Activated CD4-positive, alpha-beta memory T cell treated with anti-CD3 and anti-CD28 coated beads for 36 hours (primary cell): ENCODE measurements at regions of chr11 and their contacts with region 1.

Region 1: GRCh38 chr11:117807482-117808327 is 10.7 kb upstream of the DSCAML1 start:
- DNase-seq: peak; percentile 84
- H3K4me3 Mint-ChIP-seq: no peak overlapping the region
- H3K27ac Mint-ChIP-seq: no peak overlapping the region
- H3K4me1 Mint-ChIP-seq: peaks cover 17% of the 10 kb centered on the region
- H3K27me3 Mint-ChIP-seq: peaks cover 2% of the 10 kb centered on the region

Region 2: DNA sequence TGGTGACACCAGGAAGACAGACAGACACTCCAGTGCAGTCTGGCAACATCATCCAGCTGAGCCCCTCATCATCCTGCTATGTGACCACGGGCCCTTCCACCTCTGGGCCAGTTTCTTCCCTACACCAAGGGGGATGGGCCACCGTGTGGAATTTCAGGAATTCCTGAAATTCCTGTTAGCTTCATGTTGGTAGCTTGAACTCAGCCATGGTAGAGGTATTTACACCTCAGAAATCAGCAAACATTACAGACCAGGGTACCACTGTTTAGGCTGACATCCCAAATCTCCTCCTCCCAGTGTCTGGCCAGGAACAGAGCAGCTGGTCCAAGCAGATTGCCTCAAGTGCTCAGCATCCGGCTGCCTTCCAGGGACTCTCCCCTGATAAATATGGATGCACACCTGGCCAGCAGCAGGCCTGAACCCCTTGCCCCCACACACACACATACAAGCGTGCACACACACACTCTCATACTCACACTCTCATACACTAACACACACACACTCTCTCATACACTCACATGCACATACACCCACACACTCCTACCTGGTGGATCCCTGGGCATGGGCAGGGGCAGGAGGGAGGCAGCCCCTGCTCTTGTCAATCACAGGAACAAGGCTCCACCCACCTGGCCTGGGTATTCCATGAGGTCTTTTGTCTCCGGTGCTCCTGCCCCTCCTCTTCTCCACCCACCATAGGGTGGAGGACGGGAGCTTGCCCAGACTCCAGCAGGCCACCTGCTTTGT is 1120.1 kb before region 1 on chr11:
- CTCF ChIA-PET with region 1: no interaction called
- POLR2A ChIA-PET with region 1: no interaction called
- intact Hi-C with region 1: no loop called
- DNase-seq: no peak
- H3K4me3 Mint-ChIP-seq: no peak overlapping the region
- H3K27ac Mint-ChIP-seq: no peak overlapping the region
- H3K4me1 Mint-ChIP-seq: no peaks in the 10 kb centered on the region
- H3K27me3 Mint-ChIP-seq: peaks cover 13% of the 10 kb centered on the region

Region 3: GRCh38 chr11:117796872-117797529 is 10.7 kb before region 1 on chr11 and contains the start of gene DSCAML1:
- CTCF ChIA-PET with region 1: interaction called, 19 read pairs
- POLR2A ChIA-PET with region 1: no interaction called
- intact Hi-C with region 1: no loop called
- DNase-seq: peak; percentile 42
- H3K4me3 Mint-ChIP-seq: no peak within 1 kb of the TSS
- H3K27ac Mint-ChIP-seq: no peak within 1 kb of the TSS
- H3K4me1 Mint-ChIP-seq: peaks cover 7% of the 10 kb centered on the region
- H3K27me3 Mint-ChIP-seq: peaks cover 53% of the 10 kb centered on the region
- total RNA-seq, gene DSCAML1: 0.29 to 0.67 TPM

Region 4: DNA sequence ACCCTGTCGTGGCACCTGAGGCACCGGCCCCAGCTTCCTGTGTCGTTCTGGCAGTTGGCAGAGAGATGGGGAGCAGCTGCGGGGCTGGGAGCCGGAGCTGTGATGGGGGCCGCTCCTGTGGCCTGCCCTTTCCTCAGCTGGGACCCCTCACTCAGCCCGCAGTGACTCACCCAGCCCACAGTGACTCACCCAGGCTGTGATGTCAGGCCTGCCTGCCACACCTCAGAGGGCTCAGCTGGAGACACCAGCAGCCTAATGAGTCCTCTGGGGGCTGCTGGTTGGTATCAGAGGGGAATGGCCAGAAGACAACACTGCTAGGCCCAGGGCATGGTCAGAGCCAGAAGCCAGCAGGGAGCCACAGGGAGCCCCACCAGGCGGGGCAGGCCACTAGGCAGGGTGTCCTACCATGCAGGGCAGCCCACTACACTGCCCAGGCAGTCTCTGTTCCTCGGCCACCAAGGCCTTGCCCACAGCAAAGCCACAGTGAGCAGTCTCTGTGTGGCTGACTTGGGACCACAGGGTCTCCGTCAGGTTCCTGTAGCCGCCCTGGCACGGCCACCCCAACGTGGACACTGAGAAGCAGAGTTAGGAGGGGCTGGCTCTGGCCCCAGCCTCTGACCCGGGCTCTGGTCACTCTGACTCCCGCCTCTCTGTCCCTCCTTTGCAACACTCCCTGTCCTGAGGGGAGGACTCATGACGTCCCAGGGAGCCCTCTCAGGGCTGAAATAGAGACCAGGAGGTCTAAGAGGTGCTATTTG is 21.1 kb after region 1 on chr11:
- CTCF ChIA-PET with region 1: interaction called, 68 read pairs
- POLR2A ChIA-PET with region 1: no interaction called
- intact Hi-C with region 1: no loop called
- DNase-seq: peak; percentile 91
- H3K4me3 Mint-ChIP-seq: no peak overlapping the region
- H3K27ac Mint-ChIP-seq: peak overlapping the region; percentile 28
- H3K4me1 Mint-ChIP-seq: peaks cover 45% of the 10 kb centered on the region
- H3K27me3 Mint-ChIP-seq: no peaks in the 10 kb centered on the region

Region 5: DNA sequence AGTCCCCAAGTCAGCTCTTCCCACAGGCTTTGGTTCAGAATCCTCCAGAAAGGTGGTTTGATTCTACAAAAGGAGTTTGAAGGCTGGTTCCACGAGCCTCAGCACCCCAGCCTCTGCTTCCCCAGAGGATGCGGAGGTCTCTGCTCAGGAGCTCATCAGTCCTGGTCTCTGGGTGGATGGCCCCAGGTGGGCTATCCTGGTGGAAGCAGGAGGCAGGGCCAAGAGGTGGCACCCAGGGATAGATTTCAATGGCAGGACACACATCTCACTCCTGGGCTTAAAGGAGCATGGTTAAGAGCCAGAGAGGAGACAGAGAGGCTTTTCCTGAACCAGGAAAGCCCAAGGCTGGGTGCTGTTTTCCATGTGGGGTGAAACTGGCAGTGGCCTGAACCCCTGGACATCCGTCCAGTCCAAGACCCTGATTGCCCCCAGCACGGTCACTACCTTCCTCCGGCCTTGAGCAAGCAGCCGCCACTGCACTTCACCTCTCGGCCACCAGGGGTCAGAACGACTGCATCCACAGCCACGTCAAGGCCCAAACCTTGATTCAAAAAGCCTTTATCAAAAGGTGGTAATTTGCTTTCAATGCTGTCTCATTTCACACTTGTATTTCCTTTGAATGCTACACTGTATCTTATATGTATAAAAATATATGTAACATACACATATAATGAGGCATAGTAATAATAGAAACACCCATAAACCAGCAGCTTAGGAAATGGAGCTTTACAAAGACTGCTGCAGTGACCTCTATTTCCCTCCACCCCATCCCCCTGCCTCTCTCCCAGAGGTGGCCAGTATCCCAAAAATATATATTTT is 36.2 kb after region 1 on chr11:
- CTCF ChIA-PET with region 1: interaction called, 14 read pairs
- POLR2A ChIA-PET with region 1: no interaction called
- intact Hi-C with region 1: no loop called
- DNase-seq: peak; percentile 90
- H3K4me3 Mint-ChIP-seq: no peak overlapping the region
- H3K27ac Mint-ChIP-seq: no peak overlapping the region
- H3K4me1 Mint-ChIP-seq: no peaks in the 10 kb centered on the region
- H3K27me3 Mint-ChIP-seq: no peaks in the 10 kb centered on the region

Region 6: GRCh38 chr11:118046051-118046963 is 238.6 kb after region 1 on chr11:
- CTCF ChIA-PET with region 1: interaction called, 148 read pairs
- POLR2A ChIA-PET with region 1: no interaction called
- intact Hi-C with region 1: no loop called
- DNase-seq: peak; percentile 58
- H3K4me3 Mint-ChIP-seq: peak overlapping the region; percentile 28
- H3K27ac Mint-ChIP-seq: peak overlapping the region; percentile 91
- H3K4me1 Mint-ChIP-seq: peaks cover 91% of the 10 kb centered on the region
- H3K27me3 Mint-ChIP-seq: no peaks in the 10 kb centered on the region

Region 7: DNA sequence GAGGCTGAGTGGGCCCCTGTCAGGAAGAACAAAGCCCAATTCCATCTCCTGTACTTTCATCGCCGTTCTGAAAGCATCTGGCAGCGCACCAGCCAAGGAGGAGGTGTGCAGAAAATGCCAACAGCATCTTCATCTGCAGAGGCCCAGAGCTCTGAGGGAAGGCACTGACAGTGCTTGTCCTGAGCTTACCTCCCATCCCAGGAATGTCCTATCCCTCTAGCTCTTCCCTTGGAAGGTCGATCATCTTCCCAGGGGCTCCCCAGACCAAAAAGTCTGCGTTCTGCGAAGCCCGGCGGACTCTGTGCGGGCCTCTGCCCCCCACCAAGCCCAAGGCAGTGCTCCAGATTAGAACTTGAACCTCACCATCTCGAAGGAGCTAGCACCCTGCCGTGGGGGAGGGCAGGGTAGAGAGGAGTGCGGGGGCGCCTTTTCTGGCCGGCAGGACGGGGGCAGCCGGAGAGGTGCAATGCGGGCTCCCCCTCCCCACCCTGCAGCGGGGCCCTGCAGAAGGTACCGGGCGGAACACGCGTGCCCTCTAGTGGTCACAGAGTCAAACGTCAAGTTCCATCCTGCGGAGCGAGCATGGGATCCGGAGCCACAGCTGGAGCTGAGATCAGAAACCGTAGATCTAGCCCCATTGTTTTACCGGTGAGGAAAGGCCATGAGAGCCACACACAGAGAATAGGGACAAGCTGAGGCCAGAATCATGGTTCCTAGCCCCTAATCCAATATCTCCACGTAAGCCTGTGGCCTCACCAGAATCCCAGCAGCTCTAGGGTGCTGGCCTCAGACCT is 363.8 kb after region 1 on chr11:
- CTCF ChIA-PET with region 1: interaction called, 30 read pairs
- POLR2A ChIA-PET with region 1: no interaction called
- intact Hi-C with region 1: no loop called
- DNase-seq: peak; percentile 81
- H3K4me3 Mint-ChIP-seq: no peak overlapping the region
- H3K27ac Mint-ChIP-seq: no peak overlapping the region
- H3K4me1 Mint-ChIP-seq: no peaks in the 10 kb centered on the region
- H3K27me3 Mint-ChIP-seq: peaks cover 9% of the 10 kb centered on the region